Spleen (tissue), 13 donors: ENCODE measurements at regions of chrX and their contacts with region 1.

Region 1: DNA sequence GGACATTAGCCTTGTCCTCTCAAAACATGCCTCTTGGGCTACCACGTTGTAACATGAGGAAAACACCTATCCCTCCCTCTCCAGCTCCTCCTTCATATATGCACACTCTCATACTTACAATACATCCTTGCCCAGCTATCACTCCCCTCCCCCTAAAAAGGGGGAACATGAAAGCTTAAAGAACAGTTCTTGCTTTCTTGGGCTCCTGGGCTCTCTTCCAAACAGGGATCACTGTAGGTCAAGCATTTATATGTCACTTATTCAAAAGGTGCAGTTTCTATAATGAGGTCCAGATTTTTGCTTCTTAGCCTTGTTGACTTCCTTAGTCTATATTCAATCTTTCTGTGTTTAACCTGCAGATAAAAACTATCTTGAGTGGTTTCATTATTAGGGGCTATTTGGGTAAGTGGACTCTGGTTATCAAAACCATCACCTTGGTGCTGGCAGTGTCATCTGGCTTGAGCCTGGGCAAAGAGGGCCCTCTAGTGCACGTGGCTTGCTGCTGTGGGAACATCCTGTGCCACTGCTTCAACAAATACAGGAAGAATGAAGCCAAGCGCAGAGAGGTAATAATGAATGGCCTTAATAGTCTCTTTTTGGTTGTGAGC is 119.4 kb downstream of the AKAP4 start:
- DNase-seq: no peak
- H3K4me3 ChIP-seq: no peak overlapping the region
- H3K27ac ChIP-seq: no peak overlapping the region
- H3K4me1 ChIP-seq: no peaks in the 10 kb centered on the region
- H3K27me3 ChIP-seq: no peaks in the 10 kb centered on the region
- CTCF ChIP-seq: peak in 2 of 11 experiments; percentile 18 to 20
- POLR2A ChIP-seq: no peak

Region 2: DNA sequence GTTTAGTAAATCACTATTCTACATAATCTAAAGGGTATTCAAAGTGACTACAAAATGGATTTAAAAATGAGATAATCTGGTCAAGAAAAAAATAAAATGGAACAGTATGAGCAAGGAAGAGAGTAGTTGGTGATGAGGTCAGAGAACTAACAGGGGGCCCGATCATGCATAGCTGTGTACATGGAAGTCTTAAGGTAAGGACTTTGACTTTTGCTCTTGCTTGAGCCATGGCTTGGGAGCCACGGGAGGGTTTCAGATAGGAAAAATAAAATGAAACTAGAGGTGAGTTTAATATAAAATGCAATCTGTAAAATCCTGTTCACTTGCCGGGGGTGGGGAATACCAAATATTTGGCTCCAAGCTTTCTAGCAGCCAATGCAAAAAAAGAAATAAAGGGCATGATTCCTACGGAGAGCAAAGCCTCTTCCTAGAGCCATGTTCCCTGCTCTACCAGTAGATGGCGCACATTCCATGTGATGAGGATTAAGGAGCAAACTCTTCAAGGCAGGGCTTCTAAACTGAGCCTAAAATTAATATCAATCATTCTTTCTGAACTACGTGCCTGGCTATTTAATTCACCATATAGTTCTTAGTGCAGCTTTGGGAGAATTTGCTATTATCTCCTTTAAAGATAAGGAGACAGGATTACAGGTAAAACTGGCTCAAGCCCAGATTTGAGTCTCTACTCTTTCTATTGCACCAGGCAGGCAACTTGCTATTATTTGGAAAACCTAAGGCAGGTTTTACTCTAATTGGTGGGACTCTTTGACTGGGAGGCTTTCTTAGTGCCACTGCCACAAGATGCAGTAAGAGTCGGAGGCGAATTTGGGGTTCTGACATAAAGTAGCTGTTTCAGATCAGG is 165.8 kb before region 1 on chrX:
- intact Hi-C with region 1: loop called (anchors 10 kb)
- DNase-seq: no peak
- H3K4me3 ChIP-seq: no peak overlapping the region
- H3K27ac ChIP-seq: no peak overlapping the region
- H3K4me1 ChIP-seq: no peaks in the 10 kb centered on the region
- H3K27me3 ChIP-seq: peaks cover 0 to 9% (median 0%) of the 10 kb centered on the region in 7 donors
- CTCF ChIP-seq: peak; percentile 10 to 88 (median 78)
- POLR2A ChIP-seq: no peak

Region 3: GRCh38 chrX:50157545-50158135 is 76.3 kb after region 1 on chrX:
- intact Hi-C with region 1: no loop called
- DNase-seq: no peak
- H3K4me3 ChIP-seq: no peak overlapping the region
- H3K27ac ChIP-seq: peak overlapping the region in 2 of 8 donors; percentile 7 to 12
- H3K4me1 ChIP-seq: no peaks in the 10 kb centered on the region
- H3K27me3 ChIP-seq: peaks cover 0 to 9% (median 0%) of the 10 kb centered on the region in 7 donors
- CTCF ChIP-seq: no peak
- POLR2A ChIP-seq: no peak

Region 4: DNA sequence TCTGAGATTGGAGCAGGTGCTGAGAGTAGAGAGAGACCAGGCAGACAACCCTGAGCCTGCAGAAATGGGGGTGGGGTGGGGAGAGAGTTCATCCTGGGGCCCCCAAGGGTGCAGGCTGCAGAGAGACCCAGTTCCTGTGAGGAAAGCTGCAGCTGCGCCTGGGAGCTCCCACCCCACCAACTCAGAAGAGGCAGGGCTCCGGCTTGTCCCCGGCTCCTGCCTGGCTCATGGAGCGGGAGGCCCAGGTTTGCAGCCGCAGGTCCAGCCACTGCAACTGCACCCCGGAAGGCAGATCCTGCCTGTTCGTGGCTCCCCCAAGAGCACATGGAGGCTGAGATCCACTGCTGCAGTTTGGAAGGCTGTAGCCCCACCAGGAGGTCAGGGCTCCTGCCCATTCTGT is 433.4 kb after region 1 on chrX:
- intact Hi-C with region 1: no loop called
- DNase-seq: no peak
- H3K4me3 ChIP-seq: no peak overlapping the region
- H3K27ac ChIP-seq: no peak overlapping the region
- H3K4me1 ChIP-seq: no peaks in the 10 kb centered on the region
- H3K27me3 ChIP-seq: peaks cover 0 to 2% (median 0%) of the 10 kb centered on the region in 7 donors
- CTCF ChIP-seq: no peak
- POLR2A ChIP-seq: no peak

Region 5: GRCh38 chrX:51024077-51024696 is 942.8 kb after region 1 on chrX:
- intact Hi-C with region 1: no loop called
- DNase-seq: no peak
- H3K4me3 ChIP-seq: no peak overlapping the region
- H3K27ac ChIP-seq: no peak overlapping the region
- H3K4me1 ChIP-seq: no peaks in the 10 kb centered on the region
- H3K27me3 ChIP-seq: peaks cover 0 to 14% (median 0%) of the 10 kb centered on the region in 7 donors
- CTCF ChIP-seq: no peak
- POLR2A ChIP-seq: no peak